ENCODE measurements at regions of chrX and their contacts with region 1.

Region 1: GRCh38 chrX:46777971-46778810 is 19.3 kb upstream of the SLC9A7 start:
- DNase-seq: no peak
- H3K4me3 ChIP-seq: no peak overlapping the region
- H3K27ac ChIP-seq: no peak overlapping the region
- H3K4me1 ChIP-seq: no peaks in the 10 kb centered on the region
- H3K27me3 ChIP-seq: no peaks in the 10 kb centered on the region
- CTCF ChIP-seq: no peak
- EP300 ChIP-seq: no peak
- POLR2A ChIP-seq: no peak
- RAD21 ChIP-seq: no peak

Region 2: DNA sequence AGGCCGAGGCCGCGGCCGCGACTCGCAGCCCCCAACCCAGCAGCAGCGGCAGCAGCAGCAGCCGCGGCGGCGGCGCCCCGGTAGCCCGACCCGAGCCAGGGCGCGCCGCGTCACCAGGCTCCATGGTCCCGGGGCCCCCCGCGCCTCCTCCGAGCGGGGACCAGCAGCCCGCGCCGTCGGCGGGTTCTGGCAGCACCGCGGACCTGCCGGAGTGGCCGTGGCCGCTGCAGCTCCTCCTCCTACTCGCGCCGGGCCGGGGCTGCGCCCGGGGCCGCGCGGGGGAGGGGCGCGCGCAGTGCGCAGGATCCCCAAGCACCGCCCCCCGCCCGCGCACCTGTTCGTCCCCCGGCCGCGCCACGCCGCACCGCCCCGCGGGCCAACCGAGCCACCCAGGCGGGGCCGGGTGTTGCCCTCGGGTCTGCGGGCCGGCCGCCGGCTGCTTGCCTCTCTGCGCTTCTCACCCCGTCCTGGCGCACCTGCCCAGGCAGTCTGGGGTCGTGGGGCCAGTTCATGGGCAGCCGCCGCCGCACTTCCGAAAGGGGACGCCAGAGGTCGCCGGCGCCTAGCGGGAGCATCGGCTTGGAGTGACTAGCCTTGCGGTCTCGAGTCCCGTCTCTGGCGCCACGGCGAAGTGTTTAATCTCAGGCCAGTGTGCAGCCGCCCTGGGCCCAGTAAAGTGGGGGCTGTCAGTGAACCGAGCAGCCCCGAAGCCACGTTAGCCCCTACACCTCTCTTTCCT is 19.1 kb before region 1 on chrX and contains the start of gene SLC9A7:
- CTCF ChIA-PET with region 1: interaction called, 15 read pairs
- POLR2A ChIA-PET with region 1: no interaction called
- DNase-seq: peak; percentile 53 to 89
- H3K4me3 ChIP-seq: peak within 1 kb of the TSS; percentile 61 to 79 (median 73)
- H3K27ac ChIP-seq: no peak within 1 kb of the TSS; the same call in 1 of the 2 replicates
- H3K4me1 ChIP-seq: peaks cover 2 to 16% (median 10%) of the 10 kb centered on the region in 4 experiments; a peak in 6 of 7 replicates
- H3K27me3 ChIP-seq: no peaks in the 10 kb centered on the region; a peak in 1 of 7 replicates
- CTCF ChIP-seq: peak; percentile 79 to 82 (median 79)
- EP300 ChIP-seq: no peak
- POLR2A ChIP-seq: no peak
- RAD21 ChIP-seq: peak; percentile 81 to 89
- total RNA-seq, gene SLC9A7: 12.7 and 17.2 TPM in 2 replicates

Region 3: GRCh38 chrX:46796574-46797191 is 18.5 kb after region 1 on chrX:
- CTCF ChIA-PET with region 1: interaction called, 14 read pairs
- POLR2A ChIA-PET with region 1: interaction called, 3 read pairs
- DNase-seq: peak in 1 of 2 experiments; percentile 78
- H3K4me3 ChIP-seq: no peak overlapping the region
- H3K27ac ChIP-seq: no peak overlapping the region
- H3K4me1 ChIP-seq: peaks cover 0 to 2% (median 0%) of the 10 kb centered on the region in 4 experiments; a peak in 1 of 7 replicates
- H3K27me3 ChIP-seq: no peaks in the 10 kb centered on the region
- CTCF ChIP-seq: peak; percentile 67 to 76 (median 73)
- EP300 ChIP-seq: no peak
- POLR2A ChIP-seq: no peak
- RAD21 ChIP-seq: peak; percentile 81 to 85

Region 4: DNA sequence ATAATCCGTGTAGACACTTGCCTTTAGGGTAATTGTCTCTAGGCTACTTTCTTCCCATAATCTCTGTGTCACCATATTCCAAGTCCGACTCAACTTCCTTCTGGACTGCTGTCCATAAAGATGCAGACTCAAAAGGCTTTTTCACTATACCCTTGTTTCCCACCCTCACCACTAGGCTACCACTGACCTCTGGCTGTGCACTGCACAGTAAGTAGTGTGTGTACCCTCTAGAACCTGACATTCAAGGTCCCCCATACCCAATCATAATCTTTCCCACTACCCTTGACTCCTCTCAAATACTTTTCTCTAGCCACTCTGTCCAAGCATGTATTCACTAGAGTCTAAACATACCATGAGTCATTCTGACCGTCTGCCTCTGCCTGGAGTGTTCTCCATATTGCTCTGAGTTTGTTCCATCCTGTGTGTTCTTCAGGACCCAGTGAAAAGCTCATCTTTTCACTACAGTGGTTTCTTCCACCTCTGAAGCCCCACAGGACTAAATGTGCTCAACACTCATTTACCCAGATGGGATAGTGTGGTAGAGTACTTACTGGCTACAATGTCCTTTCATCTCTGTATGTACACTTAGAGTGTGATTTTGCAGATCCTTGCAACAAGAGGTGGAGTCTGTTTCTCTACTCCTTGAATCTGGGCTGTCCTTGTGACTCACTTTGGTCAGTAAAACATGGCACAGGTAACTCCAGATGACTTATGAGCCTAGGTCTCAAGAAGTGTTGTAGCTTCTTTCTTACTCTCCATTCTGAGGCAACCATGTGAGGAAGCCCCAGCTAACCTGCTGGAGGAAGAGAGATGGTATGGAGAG is 151.5 kb after region 1 on chrX:
- CTCF ChIA-PET with region 1: no interaction called
- POLR2A ChIA-PET with region 1: no interaction called
- DNase-seq: no peak
- H3K4me3 ChIP-seq: no peak overlapping the region
- H3K27ac ChIP-seq: no peak overlapping the region
- H3K4me1 ChIP-seq: no peaks in the 10 kb centered on the region
- H3K27me3 ChIP-seq: no peaks in the 10 kb centered on the region
- CTCF ChIP-seq: no peak
- EP300 ChIP-seq: no peak
- POLR2A ChIP-seq: no peak
- RAD21 ChIP-seq: no peak

Measured in H1 (cell line).